Gastrocnemius medialis (tissue), 4 donors: ENCODE measurements at regions of chr7 and their contacts with region 1.

Region 1: DNA sequence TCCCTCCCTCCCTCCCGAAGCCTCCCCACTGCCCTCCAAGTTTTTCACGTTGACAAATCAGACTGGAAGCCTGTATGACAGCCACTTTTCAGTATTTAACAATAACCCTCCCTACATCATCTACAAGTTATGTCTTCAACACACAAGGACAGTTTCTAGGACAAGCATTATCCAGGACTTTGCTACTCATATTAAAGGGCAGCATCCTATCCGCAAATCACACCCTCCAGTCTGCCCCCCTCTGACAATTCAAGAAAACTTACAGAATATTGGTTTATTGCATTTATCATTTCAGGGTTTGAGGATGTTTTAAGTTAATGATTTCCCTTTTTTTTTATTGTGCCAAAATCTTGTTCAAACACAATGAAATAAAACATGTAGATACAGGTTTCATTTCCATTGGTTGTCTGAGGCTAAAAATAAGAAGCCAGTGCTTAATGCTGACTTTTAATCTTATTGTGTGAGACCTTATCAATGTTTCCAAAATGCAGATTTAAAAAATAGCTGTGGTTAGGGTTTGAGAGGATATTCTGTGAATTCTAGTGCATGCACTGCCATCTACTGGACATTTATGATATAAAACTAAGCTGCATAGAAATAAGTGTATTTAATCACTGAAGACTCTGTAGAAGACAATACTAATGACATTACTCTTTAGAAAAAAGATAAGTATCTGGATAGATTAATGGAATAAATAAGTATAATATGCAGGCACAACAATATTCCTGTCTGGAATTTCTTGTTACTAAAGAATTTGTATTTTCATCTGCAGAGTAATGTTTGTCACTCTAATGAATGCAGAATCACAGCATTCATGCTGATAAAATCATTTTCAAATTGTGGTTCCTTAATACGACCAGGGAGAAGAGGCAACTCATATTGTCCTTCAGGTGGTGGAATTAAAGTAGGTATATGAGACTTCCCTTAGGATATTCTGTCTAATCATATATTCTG is 64.1 kb downstream of the CAV1 start:
- DNase-seq: no peak
- ATAC-seq: peak in 1 of 2 donors; percentile 31
- H3K4me3 ChIP-seq: no peak overlapping the region
- H3K27ac ChIP-seq: peak overlapping the region in 2 of 4 donors; percentile 36 to 37
- H3K4me1 ChIP-seq: peaks cover 10 to 12% of the 10 kb centered on the region in 2 donors
- H3K27me3 ChIP-seq: no peaks in the 10 kb centered on the region
- CTCF ChIP-seq: peak; percentile 66 to 84 (median 71)
- POLR2A ChIP-seq: no peak

Region 2: GRCh38 chr7:116258734-116259133 is 330.2 kb before region 1 on chr7:
- in situ Hi-C with region 1: loop called in 3 of 4 experiments (anchors 5 to 25 kb)
- intact Hi-C with region 1: loop called (anchors 1 kb)
- DNase-seq: peak in 1 of 2 donors; percentile 8
- ATAC-seq: peak; percentile 61 to 75
- H3K4me3 ChIP-seq: peak overlapping the region in 1 of 4 donors; percentile 24
- H3K27ac ChIP-seq: peak overlapping the region in 1 of 4 donors; percentile 45
- H3K4me1 ChIP-seq: peaks cover 0 to 8% of the 10 kb centered on the region in 2 donors
- H3K27me3 ChIP-seq: no peaks in the 10 kb centered on the region
- CTCF ChIP-seq: peak; percentile 83 to 95 (median 85)
- POLR2A ChIP-seq: peak in 1 of 2 donors; percentile 1

Region 3: GRCh38 chr7:116534790-116535189 is 54.1 kb before region 1 on chr7:
- in situ Hi-C with region 1: loop called in 2 of 4 experiments (anchors 10 kb)
- intact Hi-C with region 1: no loop called
- DNase-seq: peak; percentile 24 to 51
- ATAC-seq: peak; percentile 60 to 64
- H3K4me3 ChIP-seq: peak overlapping the region in 1 of 4 donors; percentile 14
- H3K27ac ChIP-seq: peak overlapping the region; percentile 32 to 58 (median 52)
- H3K4me1 ChIP-seq: peaks cover 11 to 28% of the 10 kb centered on the region in 2 donors
- H3K27me3 ChIP-seq: no peaks in the 10 kb centered on the region
- CTCF ChIP-seq: no peak
- POLR2A ChIP-seq: no peak

Region 4: GRCh38 chr7:116665332-116665996 is 76.5 kb after region 1 on chr7:
- in situ Hi-C with region 1: loop called in 3 of 4 experiments (anchors 5 to 10 kb)
- intact Hi-C with region 1: loop called (anchors 2 kb)
- DNase-seq: no peak
- ATAC-seq: no peak
- H3K4me3 ChIP-seq: no peak overlapping the region
- H3K27ac ChIP-seq: no peak overlapping the region
- H3K4me1 ChIP-seq: peaks cover 12 to 14% of the 10 kb centered on the region in 2 donors
- H3K27me3 ChIP-seq: no peaks in the 10 kb centered on the region
- CTCF ChIP-seq: no peak
- POLR2A ChIP-seq: no peak

Region 5: GRCh38 chr7:116726713-116727431 is 138.0 kb after region 1 on chr7:
- in situ Hi-C with region 1: no loop called
- intact Hi-C with region 1: loop called (anchors 5 kb)
- DNase-seq: no peak
- ATAC-seq: peak; percentile 37 to 64
- H3K4me3 ChIP-seq: no peak overlapping the region
- H3K27ac ChIP-seq: peak overlapping the region; percentile 6 to 49 (median 21)
- H3K4me1 ChIP-seq: peaks cover 36 to 50% of the 10 kb centered on the region in 2 donors
- H3K27me3 ChIP-seq: no peaks in the 10 kb centered on the region
- CTCF ChIP-seq: no peak
- POLR2A ChIP-seq: no peak